OCI-LY7 (cell line): ENCODE measurements at regions of chr10 and their contacts with region 1.

Region 1: GRCh38 chr10:102009801-102010425 is 46.1 kb downstream of the ARMH3 start:
- DNase-seq: peak; percentile 80
- H3K4me3 ChIP-seq: no peak overlapping the region
- H3K27ac ChIP-seq: no peak overlapping the region
- H3K4me1 ChIP-seq: no peaks in the 10 kb centered on the region
- CTCF ChIP-seq: peak; percentile 99

Region 2: DNA sequence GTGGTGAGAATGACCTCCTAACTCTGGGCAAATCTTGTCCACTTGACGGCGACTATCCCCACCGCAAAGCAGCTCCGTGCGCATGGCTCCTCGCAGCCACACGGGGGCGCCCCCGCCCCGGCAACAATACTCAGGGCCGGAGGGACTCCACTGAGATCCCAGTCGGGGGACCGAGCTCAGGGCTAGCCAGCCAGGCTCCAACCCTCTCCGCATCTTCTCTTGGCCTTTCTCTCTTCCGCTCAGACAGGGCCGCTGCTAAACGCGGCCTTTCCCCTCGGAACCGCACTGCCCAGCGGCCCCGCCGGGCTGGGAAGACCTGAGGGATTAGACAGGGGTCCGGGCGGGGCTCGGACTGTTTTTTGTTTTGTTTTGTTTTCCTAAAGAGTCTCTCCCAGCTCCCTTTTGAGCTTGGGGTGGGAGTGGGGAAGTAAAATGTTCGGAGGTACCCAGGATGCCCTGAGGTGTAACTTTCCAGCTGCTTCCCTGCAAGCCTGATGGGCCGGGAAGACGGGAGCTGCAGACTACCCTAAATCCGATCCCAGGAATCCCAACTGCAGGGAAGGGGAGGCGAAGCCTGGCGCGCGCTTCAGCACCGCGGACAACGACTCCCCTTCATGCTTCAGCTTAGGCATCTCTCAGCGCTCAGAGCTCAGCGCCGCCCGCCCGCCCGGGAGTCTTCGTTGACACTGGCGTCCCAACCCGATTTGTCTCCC is 169.0 kb before region 1 on chr10:
- CTCF ChIA-PET with region 1: interaction called, 8 read pairs
- POLR2A ChIA-PET with region 1: no interaction called
- intact Hi-C with region 1: loop called (anchors 1 kb)
- DNase-seq: peak; percentile 75
- H3K4me3 ChIP-seq: no peak overlapping the region
- H3K27ac ChIP-seq: no peak overlapping the region
- H3K4me1 ChIP-seq: peaks cover 15% of the 10 kb centered on the region
- CTCF ChIP-seq: peak; percentile 96

Region 3: DNA sequence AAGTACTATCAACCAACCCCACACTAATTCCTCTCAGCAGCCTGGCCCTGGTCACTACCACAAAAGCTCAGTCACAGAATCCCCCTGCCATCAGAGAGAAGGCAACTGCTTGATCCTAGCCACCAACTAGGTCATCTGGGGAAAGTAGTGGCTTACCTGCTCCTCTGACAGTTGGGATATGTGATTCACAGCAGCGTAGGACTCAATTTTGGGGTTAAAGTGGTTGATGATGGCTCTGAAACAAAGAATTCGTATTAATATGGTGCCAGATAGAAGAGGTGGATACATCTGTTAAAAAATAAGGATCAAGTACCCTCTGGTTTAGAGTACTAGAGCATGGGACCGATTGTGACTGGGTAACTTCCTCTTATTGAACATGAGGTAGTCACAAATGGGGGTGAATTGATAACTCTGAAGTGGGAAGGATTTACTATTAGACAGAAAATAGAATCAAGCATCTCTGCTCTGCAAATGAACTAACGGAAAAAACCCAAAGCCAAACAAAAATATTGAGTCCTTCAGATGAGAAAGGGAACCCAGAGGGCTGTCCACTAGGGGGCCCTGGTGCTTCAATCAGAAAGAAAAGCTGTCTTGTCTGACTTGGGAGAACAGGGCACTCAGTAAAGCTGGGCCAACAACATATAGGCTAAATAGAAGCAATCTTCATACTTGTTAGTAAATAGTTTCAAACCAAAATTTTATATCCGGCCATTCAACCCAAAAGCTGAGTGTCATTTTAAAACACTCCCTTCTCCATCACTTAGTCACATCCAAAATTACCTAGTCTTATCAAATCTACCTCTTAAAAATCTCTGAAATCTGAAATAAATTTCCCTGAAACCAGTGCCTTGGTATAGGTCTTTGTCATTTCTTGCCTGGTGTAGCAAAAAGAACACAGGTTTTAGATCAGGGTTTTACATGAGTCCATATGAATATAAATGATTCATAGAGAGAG is 120.4 kb before region 1 on chr10:
- CTCF ChIA-PET with region 1: interaction called, 5 read pairs
- POLR2A ChIA-PET with region 1: interaction called, 8 read pairs
- intact Hi-C with region 1: loop called (anchors 1 kb)
- DNase-seq: peak; percentile 79
- H3K4me3 ChIP-seq: no peak overlapping the region
- H3K27ac ChIP-seq: no peak overlapping the region
- H3K4me1 ChIP-seq: no peaks in the 10 kb centered on the region
- CTCF ChIP-seq: peak; percentile 99

Region 4: DNA sequence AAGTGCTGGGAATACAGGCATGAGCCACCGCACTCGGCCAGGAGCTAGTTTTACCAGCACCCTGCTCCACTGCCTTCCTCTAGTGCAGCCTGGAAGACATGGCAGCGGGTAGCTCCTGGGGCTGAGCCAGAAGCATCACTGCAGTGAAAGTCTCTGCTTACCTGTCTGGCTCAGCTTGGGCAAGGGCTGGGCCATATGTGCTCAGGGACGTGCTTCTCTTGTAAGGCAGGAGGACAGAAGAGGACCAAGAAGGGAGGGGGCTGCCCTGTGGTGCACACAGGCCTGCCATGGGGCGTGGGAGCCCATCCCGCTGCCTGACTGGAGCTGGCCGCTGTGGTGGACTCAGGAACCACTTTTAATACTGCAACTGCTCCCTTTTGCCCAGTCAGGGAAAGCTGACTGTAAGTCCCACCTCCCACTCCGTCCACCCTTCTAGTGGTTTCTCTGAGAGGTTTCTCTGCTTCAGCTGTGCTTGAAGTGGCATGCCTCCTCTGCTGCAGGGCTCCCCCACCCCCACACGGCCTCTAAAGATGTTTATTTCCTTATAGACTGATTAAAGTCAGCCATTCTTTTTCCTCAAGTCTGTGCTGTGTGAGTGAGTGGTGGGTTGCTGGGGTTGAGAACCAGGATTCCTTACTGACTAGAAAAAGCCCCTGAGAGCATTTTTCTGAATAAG is 466.7 kb after region 1 on chr10:
- CTCF ChIA-PET with region 1: no interaction called
- POLR2A ChIA-PET with region 1: no interaction called
- intact Hi-C with region 1: no loop called
- DNase-seq: no peak
- H3K4me3 ChIP-seq: no peak overlapping the region
- H3K27ac ChIP-seq: no peak overlapping the region
- H3K4me1 ChIP-seq: no peaks in the 10 kb centered on the region
- CTCF ChIP-seq: no peak

Region 5: GRCh38 chr10:103111031-103111917 is 1101.4 kb after region 1 on chr10:
- CTCF ChIA-PET with region 1: no interaction called
- POLR2A ChIA-PET with region 1: no interaction called
- intact Hi-C with region 1: no loop called
- DNase-seq: no peak
- H3K4me3 ChIP-seq: no peak overlapping the region
- H3K27ac ChIP-seq: no peak overlapping the region
- H3K4me1 ChIP-seq: no peaks in the 10 kb centered on the region
- CTCF ChIP-seq: no peak